ENCODE measurements at regions of chr17 and their contacts with region 1.

Region 1: DNA sequence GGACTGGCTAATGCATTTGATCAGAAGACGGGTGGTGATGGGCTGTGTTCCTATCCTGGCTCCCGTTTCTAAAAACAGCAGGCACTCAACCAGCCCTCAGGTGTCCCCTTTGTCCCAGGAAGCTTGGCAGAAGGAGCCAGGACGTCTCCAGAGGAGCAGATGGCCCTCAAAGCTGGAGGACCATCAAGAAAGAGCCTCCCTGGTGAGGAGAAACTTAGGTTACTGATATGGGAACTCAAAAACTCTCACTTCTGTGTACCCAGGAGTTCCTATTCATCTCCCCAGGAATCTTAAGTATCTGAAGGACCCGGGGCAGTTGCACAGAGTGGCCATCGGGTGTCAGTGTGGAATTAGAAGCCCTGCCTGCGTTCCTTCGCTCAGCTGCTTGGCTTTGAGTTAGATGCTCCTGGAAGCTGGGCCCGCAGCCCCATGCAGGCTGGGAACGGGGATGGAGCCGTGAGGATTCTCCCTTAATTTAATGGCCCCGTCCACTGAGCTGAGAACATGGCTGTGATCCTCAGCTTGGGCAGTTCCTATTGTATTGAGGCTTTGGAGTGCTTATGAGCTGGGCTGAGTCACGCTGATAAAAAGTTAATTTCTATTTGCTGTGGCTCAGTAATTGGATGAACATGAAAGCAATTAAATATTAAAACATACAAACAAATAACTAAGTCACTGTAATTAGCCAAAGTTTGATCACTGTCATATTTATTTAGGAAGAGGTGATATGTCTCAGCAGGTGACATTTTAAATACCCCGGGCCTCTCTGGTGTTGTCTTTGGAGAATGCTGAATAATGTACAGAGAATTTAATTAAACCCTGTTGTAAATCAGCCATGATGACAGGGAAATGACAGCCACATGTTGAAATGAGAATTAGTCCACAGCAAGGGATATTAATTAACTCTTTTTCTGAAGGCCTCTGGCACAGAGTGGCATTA is 402.1 kb downstream of the SEC14L1 start:
- DNase-seq: peak; percentile 49 to 73 (median 64)
- H3K4me3 ChIP-seq: no peak overlapping the region
- H3K27ac ChIP-seq: no peak overlapping the region
- H3K4me1 ChIP-seq: peaks cover 4% of the 10 kb centered on the region
- H3K27me3 ChIP-seq: no peaks in the 10 kb centered on the region
- CTCF ChIP-seq: peak; percentile 45 to 74 (median 56)
- EP300 ChIP-seq: no peak
- POLR2A ChIP-seq: no peak

Region 2: GRCh38 chr17:78013683-78014467 is 471.1 kb after region 1 on chr17:
- intact Hi-C with region 1: loop called in 3 of 4 experiments (anchors 5 to 10 kb)
- DNase-seq: peak in 3 of 5 donors; percentile 15 to 64 (median 31)
- H3K4me3 ChIP-seq: no peak overlapping the region
- H3K27ac ChIP-seq: no peak overlapping the region
- H3K4me1 ChIP-seq: no peaks in the 10 kb centered on the region
- H3K27me3 ChIP-seq: no peaks in the 10 kb centered on the region
- CTCF ChIP-seq: peak in 2 of 3 donors; percentile 63 to 69
- EP300 ChIP-seq: no peak
- POLR2A ChIP-seq: no peak

Region 3: GRCh38 chr17:78019367-78019975 is 476.6 kb after region 1 on chr17:
- intact Hi-C with region 1: loop called in 3 of 4 experiments (anchors 5 to 10 kb)
- DNase-seq: no peak
- H3K4me3 ChIP-seq: no peak overlapping the region
- H3K27ac ChIP-seq: no peak overlapping the region
- H3K4me1 ChIP-seq: no peaks in the 10 kb centered on the region
- H3K27me3 ChIP-seq: no peaks in the 10 kb centered on the region
- CTCF ChIP-seq: peak in 2 of 3 donors; percentile 16 to 29
- EP300 ChIP-seq: no peak
- POLR2A ChIP-seq: no peak

Measured in ovary (tissue), 10 donors.